GM12878 (cell line): ENCODE measurements at regions of chr2 and their contacts with region 1.

Region 1: GRCh38 chr2:71923887-71924533 is 223.7 kb downstream of the CYP26B1 start:
- DNase-seq: peak; percentile 2
- ATAC-seq: peak; percentile 96
- H3K4me3 ChIP-seq: no peak overlapping the region
- H3K27ac ChIP-seq: no peak overlapping the region
- H3K4me1 ChIP-seq: no peaks in the 10 kb centered on the region
- H3K27me3 ChIP-seq: no peaks in the 10 kb centered on the region
- CTCF ChIP-seq: peak; percentile 79 to 82 (median 81)
- EP300 ChIP-seq: no peak
- POLR2A ChIP-seq: no peak
- RAD21 ChIP-seq: peak; percentile 66

Region 2: GRCh38 chr2:71545572-71546274 is 378.3 kb before region 1 on chr2:
- CTCF ChIA-PET with region 1: interaction called, 5 read pairs
- POLR2A ChIA-PET with region 1: no interaction called
- RAD21 ChIA-PET with region 1: no interaction called
- SMC1A ChIA-PET with region 1: interaction called, 3 read pairs
- in situ Hi-C with region 1: no loop called
- intact Hi-C with region 1: loop called (anchors 5 kb)
- DNase-seq: no peak
- ATAC-seq: peak; percentile 94
- H3K4me3 ChIP-seq: no peak overlapping the region
- H3K27ac ChIP-seq: no peak overlapping the region
- H3K4me1 ChIP-seq: no peaks in the 10 kb centered on the region
- H3K27me3 ChIP-seq: peaks cover 0 to 4% of the 10 kb centered on the region in 2 experiments; a peak in 2 of 4 replicates
- CTCF ChIP-seq: peak; percentile 59 to 86 (median 80)
- EP300 ChIP-seq: no peak
- POLR2A ChIP-seq: no peak
- RAD21 ChIP-seq: peak; percentile 78

Region 3: DNA sequence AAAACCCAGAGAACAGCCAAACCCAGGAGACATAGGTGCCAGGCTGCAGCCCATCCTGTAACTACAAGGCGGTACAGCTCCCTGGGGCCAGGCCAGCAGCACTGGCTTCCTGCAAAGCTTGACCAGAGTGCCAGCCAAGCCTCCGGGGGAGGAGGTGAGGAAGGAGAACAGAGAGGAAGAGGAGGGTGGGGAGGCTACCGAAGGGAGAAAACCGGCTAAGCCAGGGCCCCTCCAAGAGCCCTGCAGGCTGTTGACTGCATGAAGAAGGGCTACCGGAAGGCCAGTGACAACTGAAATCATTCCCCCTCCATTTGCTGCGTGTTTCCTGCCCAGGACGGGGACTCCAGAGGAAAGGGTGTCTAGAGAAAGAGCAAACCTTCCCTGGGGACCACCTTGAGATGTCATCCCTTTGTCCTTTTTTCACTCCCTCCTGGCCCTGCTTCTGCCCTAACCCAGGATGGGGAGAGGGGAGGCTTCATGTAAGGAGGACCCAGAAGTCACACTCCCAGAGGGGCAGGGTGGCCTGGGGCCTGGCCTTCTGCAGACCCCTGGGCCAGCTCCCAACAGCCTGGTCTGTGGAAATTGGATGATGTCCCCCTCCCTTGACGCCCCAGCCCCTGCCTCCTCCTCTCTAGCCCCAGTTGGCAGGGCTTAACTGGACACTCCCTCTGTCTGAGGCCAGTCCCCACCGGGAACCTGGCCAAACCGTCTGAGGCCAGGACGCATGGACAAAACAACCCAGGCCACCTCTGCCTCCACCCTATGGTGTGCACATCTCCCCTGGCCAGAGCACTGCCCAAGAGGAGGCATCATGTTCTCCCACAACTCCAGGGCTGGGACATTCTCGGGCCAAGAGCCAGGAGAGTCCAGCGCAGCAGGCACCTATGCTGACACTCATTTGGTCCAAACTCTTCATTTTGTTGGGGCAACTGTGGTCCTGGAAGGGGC is 15.9 kb after region 1 on chr2:
- CTCF ChIA-PET with region 1: interaction called, 32 read pairs
- POLR2A ChIA-PET with region 1: no interaction called
- RAD21 ChIA-PET with region 1: no interaction called
- SMC1A ChIA-PET with region 1: interaction called, 5 read pairs
- in situ Hi-C with region 1: no loop called
- intact Hi-C with region 1: no loop called
- DNase-seq: no peak
- ATAC-seq: no peak
- H3K4me3 ChIP-seq: no peak overlapping the region
- H3K27ac ChIP-seq: no peak overlapping the region
- H3K4me1 ChIP-seq: no peaks in the 10 kb centered on the region
- H3K27me3 ChIP-seq: no peaks in the 10 kb centered on the region; a peak in 1 of 4 replicates
- CTCF ChIP-seq: no peak
- EP300 ChIP-seq: no peak
- POLR2A ChIP-seq: no peak
- RAD21 ChIP-seq: no peak

Region 4: GRCh38 chr2:72051971-72052505 is 128.0 kb after region 1 on chr2:
- CTCF ChIA-PET with region 1: no interaction called
- POLR2A ChIA-PET with region 1: no interaction called
- RAD21 ChIA-PET with region 1: no interaction called
- SMC1A ChIA-PET with region 1: no interaction called
- in situ Hi-C with region 1: no loop called
- intact Hi-C with region 1: no loop called
- DNase-seq: no peak
- ATAC-seq: no peak
- H3K4me3 ChIP-seq: no peak overlapping the region
- H3K27ac ChIP-seq: no peak overlapping the region
- H3K4me1 ChIP-seq: no peaks in the 10 kb centered on the region
- H3K27me3 ChIP-seq: no peaks in the 10 kb centered on the region
- CTCF ChIP-seq: no peak
- EP300 ChIP-seq: no peak
- POLR2A ChIP-seq: no peak
- RAD21 ChIP-seq: no peak

Region 5: DNA sequence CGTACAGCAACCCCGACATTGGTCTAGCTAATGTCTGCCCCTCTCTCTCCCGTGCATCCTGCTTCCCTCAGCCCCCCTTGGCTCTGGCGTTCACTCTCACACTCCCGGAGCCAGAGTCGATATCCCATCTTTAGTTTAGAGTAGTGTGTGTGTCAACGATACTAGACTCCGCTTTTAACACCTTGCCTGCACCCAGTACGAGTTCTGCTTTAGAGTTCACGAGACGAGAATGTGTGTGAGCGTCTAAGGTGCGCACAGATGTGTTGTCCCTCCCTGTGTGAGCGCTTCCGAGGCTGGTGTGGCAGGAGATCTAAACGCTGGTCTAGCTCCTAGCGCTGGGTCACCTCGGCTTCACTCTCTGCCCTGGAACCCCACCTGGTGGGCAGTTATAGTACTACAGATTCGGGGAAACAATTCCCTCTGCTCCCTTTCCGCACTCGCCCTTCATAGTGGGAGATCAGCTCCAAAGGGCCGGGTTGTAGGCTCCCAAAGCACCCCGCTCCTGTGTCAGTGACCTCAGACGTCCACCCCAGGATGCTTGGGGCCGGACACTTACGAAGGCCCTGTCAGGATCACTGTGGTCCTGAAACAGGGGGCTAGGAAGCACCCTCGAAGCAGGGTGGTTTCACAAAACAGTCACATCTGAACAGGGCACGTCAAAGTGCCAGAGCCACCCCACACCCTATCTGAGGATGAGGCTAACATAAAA is 226.3 kb after region 1 on chr2:
- CTCF ChIA-PET with region 1: interaction called, 28 read pairs
- POLR2A ChIA-PET with region 1: no interaction called
- RAD21 ChIA-PET with region 1: interaction called, 10 read pairs
- SMC1A ChIA-PET with region 1: interaction called, 13 read pairs
- in situ Hi-C with region 1: no loop called
- intact Hi-C with region 1: loop called (anchors 1 kb)
- DNase-seq: peak; percentile 5
- ATAC-seq: peak; percentile 92
- H3K4me3 ChIP-seq: no peak overlapping the region
- H3K27ac ChIP-seq: no peak overlapping the region
- H3K4me1 ChIP-seq: no peaks in the 10 kb centered on the region
- H3K27me3 ChIP-seq: peaks cover 14% of the 10 kb centered on the region in 2 experiments; a peak in 3 of 4 replicates
- CTCF ChIP-seq: peak; percentile 68 to 77 (median 73)
- EP300 ChIP-seq: no peak
- POLR2A ChIP-seq: no peak
- RAD21 ChIP-seq: peak; percentile 73

Region 6: DNA sequence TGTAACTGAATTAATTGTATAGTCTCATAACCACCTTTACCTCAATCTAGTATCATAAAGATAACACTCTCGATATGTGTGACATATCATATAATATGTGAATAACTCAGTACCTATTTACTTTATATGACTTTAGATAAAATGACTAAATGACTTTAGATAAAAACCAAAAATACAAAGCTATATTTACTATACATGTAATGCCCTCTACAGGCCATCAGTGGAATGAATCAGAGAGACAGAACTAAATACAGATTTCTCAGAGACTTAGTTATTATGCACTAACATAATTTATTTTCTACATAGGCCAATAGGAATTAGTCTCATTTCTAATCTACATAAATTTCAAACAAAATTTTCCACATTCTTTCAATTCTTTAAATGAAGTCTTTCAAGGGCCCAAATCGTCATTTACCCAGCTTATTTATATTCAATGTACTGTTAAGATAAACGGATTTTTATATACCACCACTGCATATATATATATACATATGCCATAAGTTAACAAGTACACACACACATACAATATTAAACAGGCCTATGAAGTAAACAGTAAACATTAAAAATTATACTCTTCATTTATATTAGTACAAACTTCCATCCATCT is 681.9 kb after region 1 on chr2:
- CTCF ChIA-PET with region 1: interaction called, 10 read pairs
- POLR2A ChIA-PET with region 1: no interaction called
- RAD21 ChIA-PET with region 1: interaction called, 4 read pairs
- SMC1A ChIA-PET with region 1: no interaction called
- in situ Hi-C with region 1: no loop called
- intact Hi-C with region 1: no loop called
- DNase-seq: no peak
- ATAC-seq: peak; percentile 47; the same call in 1 of the 3 replicates
- H3K4me3 ChIP-seq: no peak overlapping the region
- H3K27ac ChIP-seq: no peak overlapping the region
- H3K4me1 ChIP-seq: no peaks in the 10 kb centered on the region
- H3K27me3 ChIP-seq: no peaks in the 10 kb centered on the region; a peak in 1 of 4 replicates
- CTCF ChIP-seq: peak in 2 of 3 experiments; percentile 45 to 51; a peak in 3 of 6 replicates
- EP300 ChIP-seq: no peak
- POLR2A ChIP-seq: no peak
- RAD21 ChIP-seq: 0 out of 2 replicates have a peak, but pooled peaks have one; percentile 6